GM10248 (cell line): ENCODE measurements at regions of chr11 and their contacts with region 1.

Region 1: DNA sequence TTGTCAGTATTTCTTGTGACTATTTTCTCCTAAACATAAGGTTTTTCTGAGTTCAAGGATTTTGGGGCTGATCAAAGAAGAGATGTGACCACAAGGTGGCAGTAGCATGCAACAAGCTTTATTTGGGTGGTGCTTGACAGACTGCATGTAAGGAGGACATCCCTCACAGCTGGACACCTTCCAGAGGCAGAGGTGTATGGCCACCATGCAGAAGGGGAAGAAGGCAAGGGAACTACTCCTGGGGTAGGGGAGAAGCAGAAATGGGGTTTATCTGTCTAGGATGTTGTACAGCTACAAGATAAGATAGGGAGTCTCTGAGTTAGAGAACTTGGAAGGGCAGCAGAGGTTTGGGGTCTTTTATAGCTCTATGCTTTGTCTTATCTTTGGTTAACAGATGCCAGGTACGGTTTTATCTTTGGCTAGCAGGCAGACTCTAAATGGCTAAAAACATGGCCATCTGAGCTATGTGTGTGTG is 5.1 kb upstream of the BIRC2 start:
- DNase-seq: peak; percentile 54
- CTCF ChIP-seq: peak; percentile 73

Region 2: DNA sequence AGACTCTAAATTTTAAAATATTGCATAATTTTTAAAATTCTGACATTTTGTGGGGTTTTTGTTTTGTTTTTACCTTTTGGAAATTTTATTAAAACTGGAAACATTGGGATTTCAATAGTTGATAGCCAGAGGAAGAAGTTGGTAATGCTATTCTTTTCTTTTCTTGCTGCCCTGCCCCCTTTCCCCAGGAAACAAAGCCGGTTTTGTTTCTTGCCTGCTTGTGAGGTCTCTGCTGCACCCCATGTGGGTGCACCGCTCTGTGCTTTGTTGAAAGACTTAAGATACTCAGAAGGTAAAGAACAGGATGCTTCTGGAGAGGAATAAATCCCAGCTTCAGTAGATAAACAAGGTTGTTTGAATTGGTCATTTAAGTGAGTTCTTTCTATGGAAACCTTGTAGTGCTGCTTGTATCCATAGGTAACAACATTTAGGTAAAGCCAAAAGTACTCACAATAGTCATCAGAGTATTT is 144.2 kb before region 1 on chr11:
- CTCF ChIA-PET with region 1: no interaction called
- POLR2A ChIA-PET with region 1: no interaction called
- DNase-seq: no peak
- CTCF ChIP-seq: no peak

Region 3: DNA sequence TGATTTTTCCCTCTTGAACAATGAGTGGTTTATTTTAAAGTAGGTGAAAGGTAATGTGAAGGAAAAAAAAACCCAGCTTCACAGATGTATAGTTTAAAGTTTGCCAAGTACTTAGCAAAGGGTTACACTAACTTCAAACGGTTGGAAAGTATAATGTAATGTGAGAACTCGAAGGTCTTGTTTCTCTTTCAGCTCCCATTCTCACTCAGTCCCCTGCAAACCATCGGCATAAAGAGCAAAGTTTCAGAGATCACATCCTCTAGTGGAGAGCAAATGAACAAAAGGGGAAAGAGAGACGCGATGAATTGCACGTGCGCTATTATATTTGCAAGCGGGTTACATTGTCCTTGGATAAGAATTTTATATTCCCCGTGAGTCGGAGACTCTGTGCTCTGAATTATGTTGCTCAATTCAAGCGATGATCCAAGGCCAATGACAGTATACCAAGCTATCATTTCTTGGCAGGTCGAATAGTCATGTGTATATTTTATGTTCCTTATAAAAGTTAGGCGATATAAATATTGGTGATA is 62.2 kb before region 1 on chr11:
- CTCF ChIA-PET with region 1: interaction called, 11 read pairs
- POLR2A ChIA-PET with region 1: no interaction called
- DNase-seq: peak; percentile 60
- CTCF ChIP-seq: peak; percentile 0

Region 4: DNA sequence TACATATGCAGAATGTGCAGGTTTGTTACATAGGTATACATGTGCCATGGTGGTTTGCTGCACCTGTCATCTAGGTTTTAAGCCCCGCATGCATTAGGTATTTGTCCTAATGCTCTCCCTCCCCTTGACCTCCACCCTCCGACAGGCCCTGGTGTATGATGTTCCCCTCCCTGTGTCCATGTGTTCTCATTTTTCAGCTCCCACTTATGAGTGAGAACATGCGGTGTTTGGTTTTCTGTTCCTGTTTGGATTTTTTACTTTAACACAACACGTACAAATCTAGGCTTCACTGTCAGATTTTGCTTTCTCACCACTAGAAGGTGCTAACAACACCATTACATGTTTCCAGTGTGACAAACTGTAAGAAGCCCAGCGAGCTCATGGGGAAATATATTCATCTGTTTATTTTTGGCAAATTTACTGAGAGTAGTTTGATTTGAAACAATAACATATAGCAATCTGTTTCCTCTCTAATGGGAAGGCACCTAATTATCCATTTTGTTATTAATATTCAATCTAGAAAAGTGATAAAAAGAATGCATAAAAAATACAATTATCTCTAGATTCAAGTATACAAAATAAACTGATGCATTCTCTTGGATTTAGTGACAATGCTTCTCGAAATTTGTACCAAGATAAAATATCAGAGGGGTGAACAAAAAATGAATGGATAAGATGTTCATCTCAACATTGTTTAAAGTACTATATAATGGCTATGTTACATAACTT is 47.8 kb before region 1 on chr11:
- CTCF ChIA-PET with region 1: interaction called, 50 read pairs
- POLR2A ChIA-PET with region 1: no interaction called
- DNase-seq: peak; percentile 64
- CTCF ChIP-seq: peak; percentile 81

Region 5: GRCh38 chr11:102323542-102324251 is 18.2 kb before region 1 on chr11:
- CTCF ChIA-PET with region 1: interaction called, 27 read pairs
- POLR2A ChIA-PET with region 1: no interaction called
- DNase-seq: no peak
- CTCF ChIP-seq: no peak

Region 6: DNA sequence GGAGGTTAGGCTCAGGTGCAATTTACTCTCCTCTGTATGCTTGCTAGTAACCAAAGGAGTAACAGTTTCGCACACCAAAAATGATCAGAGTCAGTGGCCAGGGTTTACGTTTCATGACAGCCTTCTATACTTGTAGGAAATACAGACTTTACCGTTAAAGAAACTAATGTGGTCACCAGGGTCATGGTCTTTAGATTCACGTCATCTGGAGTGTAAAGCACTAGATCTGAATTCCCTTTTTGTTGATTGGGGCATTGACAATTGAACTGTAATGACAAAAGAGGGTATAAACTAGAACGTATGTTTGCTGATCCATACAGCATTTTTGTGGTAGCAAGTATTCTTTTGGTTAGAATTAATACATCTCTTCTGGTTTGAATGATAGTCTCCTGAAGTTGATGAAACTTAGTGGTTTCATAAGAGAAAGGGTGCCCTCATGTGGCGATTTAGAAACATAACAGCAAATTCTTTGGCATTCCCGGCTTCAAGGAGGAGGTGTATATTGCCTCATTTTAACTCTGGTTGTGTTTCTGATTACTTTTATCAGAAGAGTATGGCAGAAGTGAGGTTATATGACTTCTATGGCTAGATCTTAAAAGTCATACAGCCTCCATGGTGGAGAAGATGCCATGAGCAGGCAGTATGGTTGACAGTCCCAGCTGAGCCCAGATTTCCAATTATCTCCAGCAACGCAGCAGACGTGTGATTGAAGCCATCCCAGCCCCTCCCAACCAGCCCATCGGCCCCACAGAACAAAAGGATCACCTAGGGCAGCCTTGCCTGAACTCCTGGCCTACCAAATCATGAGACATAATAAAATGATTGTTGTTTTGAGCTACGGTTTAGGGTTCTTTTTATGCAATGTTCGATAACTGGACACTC is 153.5 kb after region 1 on chr11:
- CTCF ChIA-PET with region 1: interaction called, 50 read pairs
- POLR2A ChIA-PET with region 1: no interaction called
- DNase-seq: peak; percentile 58
- CTCF ChIP-seq: peak; percentile 68

Region 7: GRCh38 chr11:102553835-102554282 is 212.0 kb after region 1 on chr11:
- CTCF ChIA-PET with region 1: interaction called, 20 read pairs
- POLR2A ChIA-PET with region 1: interaction called, 5 read pairs
- DNase-seq: peak; percentile 26
- CTCF ChIP-seq: no peak

Region 8: DNA sequence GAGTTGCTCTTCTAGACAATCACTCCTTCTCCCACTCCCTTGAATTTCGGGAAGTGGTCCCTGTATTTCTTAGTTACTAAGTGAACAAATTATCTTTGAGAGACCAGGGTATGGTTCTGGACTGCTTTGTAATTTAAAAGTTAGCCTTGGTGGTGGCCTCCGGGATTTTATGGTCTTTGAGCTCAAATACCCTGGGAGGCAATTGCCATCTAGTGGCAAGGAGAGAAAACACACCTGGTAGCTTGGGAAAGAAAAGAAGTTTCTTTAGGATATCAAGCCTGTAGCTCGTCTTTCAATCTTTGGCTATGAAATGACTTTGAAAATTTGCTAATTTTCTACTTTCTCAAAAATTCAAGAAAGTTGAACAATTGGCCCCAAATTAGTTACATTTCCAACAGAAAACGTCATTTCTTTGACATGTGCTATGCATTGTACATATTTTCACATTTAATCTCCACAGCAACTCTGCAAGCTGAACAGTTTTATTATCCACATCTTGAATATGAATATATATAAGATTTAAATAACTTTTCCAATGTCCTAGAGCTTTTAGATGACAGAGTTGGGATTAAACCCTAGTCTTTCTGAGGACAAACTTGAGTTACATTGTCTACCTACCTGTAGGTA is 324.6 kb after region 1 on chr11:
- CTCF ChIA-PET with region 1: interaction called, 74 read pairs
- POLR2A ChIA-PET with region 1: no interaction called
- DNase-seq: peak; percentile 50
- CTCF ChIP-seq: peak; percentile 85